ENCODE measurements at regions of chrX and their contacts with region 1.

Region 1: DNA sequence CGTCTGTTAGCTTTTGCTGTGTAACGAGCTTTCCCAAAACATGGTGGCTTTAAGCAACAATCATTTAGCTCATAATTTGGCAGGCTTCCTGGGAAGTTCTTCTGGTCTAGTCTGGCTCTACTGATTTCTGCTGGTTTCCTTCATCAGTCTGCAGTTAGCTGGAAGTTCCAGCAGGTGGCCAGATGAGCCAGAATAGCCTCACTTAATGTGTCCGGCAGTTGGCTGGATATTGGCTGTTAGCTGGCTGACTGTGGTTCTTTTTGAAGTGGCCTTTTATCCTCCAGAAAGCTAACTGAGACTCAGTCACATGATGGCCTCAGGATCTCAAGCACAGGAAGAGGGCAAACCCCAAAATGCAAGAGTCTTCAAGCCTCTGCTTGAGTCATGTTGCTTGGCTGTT is 34.9 kb downstream of the FTHL17 start:
- H3K4me3 ChIP-seq: no peak overlapping the region
- H3K27ac ChIP-seq: no peak overlapping the region
- H3K4me1 ChIP-seq: no peaks in the 10 kb centered on the region
- CTCF ChIP-seq: 0 out of 2 replicates have a peak, but pooled peaks have one; percentile 9

Region 2: DNA sequence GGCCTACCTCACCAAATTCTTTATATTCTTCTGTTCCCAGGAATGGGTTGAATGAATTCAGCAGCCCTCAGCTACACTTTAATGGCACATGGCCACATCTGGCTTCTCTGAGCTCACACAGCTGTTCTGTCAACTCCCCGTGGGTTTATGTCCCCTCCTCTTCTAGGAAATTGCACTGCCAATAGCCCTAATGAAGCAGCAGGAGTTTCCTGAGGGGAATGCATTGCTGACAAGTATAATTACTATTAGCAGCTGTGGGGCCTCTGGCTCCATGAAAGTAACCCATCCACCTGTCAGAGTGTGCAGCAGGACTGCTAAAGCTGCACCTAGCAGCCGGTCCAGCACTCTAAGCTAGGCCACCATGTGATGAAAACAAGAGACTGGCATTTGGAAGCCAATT is 15.4 kb before region 1 on chrX:
- CTCF ChIA-PET with region 1: interaction called, 32 read pairs
- POLR2A ChIA-PET with region 1: no interaction called
- H3K4me3 ChIP-seq: no peak overlapping the region
- H3K27ac ChIP-seq: no peak overlapping the region
- H3K4me1 ChIP-seq: no peaks in the 10 kb centered on the region
- CTCF ChIP-seq: no peak

Region 3: GRCh38 chrX:31053621-31054020 is 16.7 kb after region 1 on chrX:
- CTCF ChIA-PET with region 1: interaction called, 26 read pairs
- POLR2A ChIA-PET with region 1: no interaction called
- H3K4me3 ChIP-seq: no peak overlapping the region
- H3K27ac ChIP-seq: no peak overlapping the region
- H3K4me1 ChIP-seq: no peaks in the 10 kb centered on the region
- CTCF ChIP-seq: no peak

Region 4: DNA sequence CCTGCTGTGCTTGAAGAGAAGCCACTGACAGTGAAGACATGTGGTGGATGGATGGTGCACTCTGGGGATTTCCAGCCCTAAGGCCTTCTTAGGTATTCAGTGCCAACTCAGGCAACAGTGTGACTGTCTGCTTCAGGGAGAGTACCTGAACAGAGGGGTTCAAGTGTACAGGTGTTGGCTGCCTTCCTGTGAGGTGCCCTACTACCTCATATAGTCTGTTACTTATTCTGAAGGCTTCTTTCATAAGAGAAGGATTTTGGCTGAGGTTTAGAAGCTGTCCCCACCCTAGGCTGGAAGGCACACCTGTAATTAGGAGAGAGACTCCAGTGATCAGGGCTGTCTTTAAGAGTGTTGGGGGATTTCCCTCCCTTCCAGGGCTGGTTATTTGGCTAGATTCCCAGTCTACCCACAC is 33.2 kb after region 1 on chrX:
- CTCF ChIA-PET with region 1: no interaction called
- POLR2A ChIA-PET with region 1: no interaction called
- H3K4me3 ChIP-seq: no peak overlapping the region
- H3K27ac ChIP-seq: no peak overlapping the region
- H3K4me1 ChIP-seq: no peaks in the 10 kb centered on the region
- CTCF ChIP-seq: no peak

Region 5: GRCh38 chrX:31423609-31424189 is 386.8 kb after region 1 on chrX:
- CTCF ChIA-PET with region 1: interaction called, 10 read pairs
- POLR2A ChIA-PET with region 1: no interaction called
- H3K4me3 ChIP-seq: no peak overlapping the region
- H3K27ac ChIP-seq: no peak overlapping the region
- H3K4me1 ChIP-seq: no peaks in the 10 kb centered on the region; the same call in 1 of the 2 replicates
- CTCF ChIP-seq: 0 out of 2 replicates have a peak, but pooled peaks have one; percentile 20

Region 6: DNA sequence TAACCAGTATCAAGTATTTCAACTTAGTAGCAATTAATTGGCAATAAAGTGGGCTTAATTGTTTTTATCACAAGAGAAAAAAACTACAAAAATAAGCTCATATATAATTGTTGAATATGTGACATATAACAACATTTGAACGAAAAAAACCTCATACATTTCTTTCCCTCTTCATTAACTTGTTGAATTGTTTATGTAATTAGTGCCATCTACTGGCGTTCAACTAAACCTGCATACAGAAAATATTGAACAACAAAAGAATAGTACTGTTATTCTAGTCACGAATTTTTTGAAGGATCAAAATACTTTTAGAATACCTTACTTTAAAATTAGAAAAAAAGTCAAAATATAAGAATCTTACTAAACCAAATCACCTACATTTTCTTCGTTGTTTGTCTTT is 621.5 kb after region 1 on chrX:
- CTCF ChIA-PET with region 1: interaction called, 91 read pairs
- POLR2A ChIA-PET with region 1: no interaction called
- H3K4me3 ChIP-seq: no peak overlapping the region
- H3K27ac ChIP-seq: no peak overlapping the region
- H3K4me1 ChIP-seq: peaks cover 5% of the 10 kb centered on the region
- CTCF ChIP-seq: no peak